Gastrocnemius medialis (tissue), 4 donors: ENCODE measurements at regions of chr19 and their contacts with region 1.

Region 1: DNA sequence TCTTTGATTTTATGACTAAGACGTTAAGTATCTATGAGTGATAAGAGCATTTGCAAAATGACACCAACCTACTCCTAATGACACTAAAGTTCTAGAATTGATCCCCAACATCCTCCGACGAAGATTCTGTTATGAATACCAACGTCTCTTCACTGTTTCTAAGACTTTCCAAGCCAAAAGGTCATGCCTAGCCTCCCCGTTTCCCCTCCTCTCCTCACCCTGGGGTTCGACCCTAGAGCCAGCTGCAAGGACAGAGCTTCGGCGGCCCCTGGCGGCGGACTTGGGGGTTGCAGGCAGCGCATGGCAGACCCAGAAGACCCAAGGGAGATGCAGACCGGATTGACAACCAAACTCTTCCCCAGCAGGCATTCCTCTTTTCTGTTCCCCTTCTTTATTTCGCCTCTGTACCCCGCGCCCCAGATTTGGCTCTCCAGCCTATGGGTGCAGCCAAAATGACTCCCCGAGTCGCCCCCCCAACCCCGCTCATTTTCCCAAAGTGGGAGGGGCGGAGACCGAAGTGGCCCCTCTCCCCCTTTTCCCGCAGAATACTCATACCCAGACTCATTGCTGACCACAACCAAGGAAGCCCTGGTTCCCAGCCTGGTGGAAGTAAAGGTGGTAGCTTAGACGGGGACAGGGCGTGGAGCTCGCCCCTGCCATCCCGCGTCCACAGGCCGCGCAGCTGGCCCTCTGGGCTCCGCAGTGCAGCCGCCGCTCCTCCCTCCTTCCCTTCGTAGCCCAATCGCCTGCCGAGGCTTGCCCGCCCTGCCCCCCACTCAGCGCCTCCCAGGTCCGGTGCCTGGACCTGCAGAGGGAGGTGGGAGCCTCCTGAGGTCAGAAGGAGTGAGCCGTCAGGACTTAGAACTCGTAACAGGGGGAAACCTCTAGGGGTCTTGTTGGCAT is 4.1 kb upstream of the EML2 start:
- DNase-seq: peak; percentile 27 to 62
- ATAC-seq: peak; percentile 43 to 58
- H3K4me3 ChIP-seq: peak overlapping the region in 1 of 4 donors; percentile 8
- H3K27ac ChIP-seq: no peak overlapping the region
- H3K4me1 ChIP-seq: peaks cover 11 to 27% of the 10 kb centered on the region in 2 donors
- H3K27me3 ChIP-seq: peaks cover 0 to 30% (median 30%) of the 10 kb centered on the region in 3 donors
- CTCF ChIP-seq: peak; percentile 96 to 99 (median 97)
- POLR2A ChIP-seq: no peak

Region 2: DNA sequence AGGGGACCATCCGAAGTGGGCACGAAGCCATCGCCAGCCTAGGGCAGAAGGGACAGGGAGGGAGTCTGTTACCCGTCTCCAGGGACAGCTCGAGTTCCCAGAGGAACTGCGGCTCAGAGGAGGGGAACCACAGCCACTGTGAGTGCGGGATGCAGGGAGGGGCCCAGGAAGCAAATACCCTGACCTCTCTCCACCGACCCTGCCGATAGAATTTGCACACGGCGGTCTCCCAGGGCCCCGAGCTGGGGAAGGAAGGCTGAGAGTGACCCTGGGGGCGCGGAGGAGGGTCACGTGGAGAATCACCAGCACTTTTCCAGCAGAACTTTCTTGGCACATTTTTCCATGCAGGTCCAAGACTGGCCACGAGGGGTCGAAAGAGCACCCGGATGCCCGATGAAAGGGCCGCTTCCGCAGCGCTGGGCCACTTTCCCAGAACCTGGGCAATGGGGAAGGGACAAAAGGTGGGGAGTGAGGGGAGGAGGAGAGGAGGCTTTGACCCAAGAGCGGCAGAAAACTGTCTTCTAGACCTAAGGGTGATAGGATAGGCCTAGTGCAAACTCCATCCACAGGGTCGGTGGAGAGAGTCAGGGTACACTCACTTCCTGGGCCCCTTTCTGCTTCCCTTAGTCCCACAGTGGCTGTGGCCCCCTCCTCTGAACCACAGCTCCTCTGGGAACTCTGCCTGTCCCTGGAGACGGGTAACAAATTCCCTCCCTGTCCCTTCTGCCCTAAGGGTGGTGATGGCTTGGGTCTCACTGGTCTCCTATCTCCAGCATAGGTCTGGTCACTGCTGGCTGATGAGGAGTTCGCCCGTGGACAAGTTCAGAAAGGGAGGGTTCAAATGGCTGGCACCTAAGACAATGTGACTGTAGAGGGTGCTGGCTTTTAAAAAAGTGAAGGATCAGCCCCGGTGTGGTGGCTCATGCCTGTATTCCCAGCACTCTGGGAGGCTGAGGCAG is 35.9 kb before region 1 on chr19:
- in situ Hi-C with region 1: loop called in 1 of 4 experiments (anchors 5 kb)
- intact Hi-C with region 1: loop called (anchors 1 kb)
- DNase-seq: peak; percentile 19 to 53
- ATAC-seq: peak; percentile 77 to 78
- H3K4me3 ChIP-seq: peak overlapping the region in 3 of 4 donors; percentile 11 to 18 (median 15)
- H3K27ac ChIP-seq: peak overlapping the region; percentile 30 to 58 (median 38)
- H3K4me1 ChIP-seq: peaks cover 4 to 5% of the 10 kb centered on the region in 2 donors
- H3K27me3 ChIP-seq: peaks cover 7 to 11% (median 10%) of the 10 kb centered on the region in 3 donors
- CTCF ChIP-seq: peak; percentile 58 to 92 (median 85)
- POLR2A ChIP-seq: no peak